Dorsolateral prefrontal cortex (tissue), 120 donors: ENCODE measurements at regions of chr20 and their contacts with region 1.

Region 1: DNA sequence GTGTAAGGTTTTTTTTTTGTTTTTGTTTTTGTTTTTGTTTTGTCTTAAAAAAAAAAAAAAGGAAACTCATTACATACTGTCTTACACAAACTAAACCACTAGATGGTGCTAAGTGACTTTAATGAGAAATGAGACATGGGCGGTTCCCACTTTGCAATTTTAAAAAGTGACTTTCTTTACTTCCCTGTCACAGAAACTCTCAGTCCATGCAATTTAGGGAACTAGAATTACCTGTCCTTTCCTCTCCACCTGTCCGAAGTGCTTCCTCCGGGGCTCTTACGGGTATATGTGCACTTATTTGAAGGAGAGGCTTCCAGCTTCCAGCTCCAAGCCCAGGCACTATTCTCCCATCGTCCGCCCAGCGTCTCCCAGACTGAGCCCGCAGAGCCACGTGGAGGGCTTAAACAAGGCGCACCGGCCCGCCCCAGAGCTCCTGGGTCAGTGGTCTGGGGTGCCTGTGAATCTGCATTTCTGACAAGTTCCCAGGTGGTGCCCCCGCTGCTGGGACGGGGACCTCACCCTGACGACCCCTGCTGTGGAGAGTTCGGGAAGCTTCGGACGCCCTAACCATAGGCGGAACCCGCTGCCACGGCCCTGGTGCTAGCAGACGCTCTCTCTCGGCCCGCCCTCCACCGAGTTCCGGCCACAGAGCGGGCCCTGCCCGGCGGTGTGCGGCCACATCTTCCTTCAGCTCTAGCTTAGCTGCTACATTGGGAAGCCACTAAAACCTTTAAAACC is 26.1 kb downstream of the BFSP1 start:
- DNase-seq: peak in 2 of 10 donors; percentile 11 to 54
- H3K4me3 ChIP-seq: peak overlapping the region; percentile 7 to 68 (median 53)
- H3K27ac ChIP-seq: peak overlapping the region in 6 of 59 donors; percentile 27 to 67 (median 48)
- H3K27me3 ChIP-seq: no peaks in the 10 kb centered on the region
- CTCF ChIP-seq: peak; percentile 62 to 89 (median 76)

Region 2: DNA sequence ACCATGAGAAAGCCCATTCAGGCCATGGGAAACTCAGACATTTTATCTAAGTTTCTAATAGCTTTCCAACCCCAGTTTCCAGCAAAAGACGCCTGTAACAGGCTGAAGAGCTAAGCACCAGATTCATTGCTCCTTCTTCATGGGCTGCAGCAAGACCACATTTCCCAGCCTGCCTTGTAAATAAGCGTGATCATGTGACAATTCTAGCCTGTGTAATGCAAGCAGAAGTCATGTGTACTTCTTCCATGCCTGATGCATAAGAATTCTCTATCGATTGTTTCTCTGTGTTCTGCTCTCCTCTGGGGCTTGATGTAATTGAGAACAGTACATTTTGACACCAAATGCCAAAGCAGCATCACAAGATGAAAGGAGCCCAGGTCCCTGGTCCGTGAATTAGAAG is 271.4 kb before region 1 on chr20:
- intact Hi-C with region 1: no loop called
- DNase-seq: no peak
- H3K4me3 ChIP-seq: no peak overlapping the region
- H3K27ac ChIP-seq: no peak overlapping the region
- H3K27me3 ChIP-seq: peaks cover 0 to 4% (median 0%) of the 10 kb centered on the region in 45 donors
- CTCF ChIP-seq: no peak

Region 3: DNA sequence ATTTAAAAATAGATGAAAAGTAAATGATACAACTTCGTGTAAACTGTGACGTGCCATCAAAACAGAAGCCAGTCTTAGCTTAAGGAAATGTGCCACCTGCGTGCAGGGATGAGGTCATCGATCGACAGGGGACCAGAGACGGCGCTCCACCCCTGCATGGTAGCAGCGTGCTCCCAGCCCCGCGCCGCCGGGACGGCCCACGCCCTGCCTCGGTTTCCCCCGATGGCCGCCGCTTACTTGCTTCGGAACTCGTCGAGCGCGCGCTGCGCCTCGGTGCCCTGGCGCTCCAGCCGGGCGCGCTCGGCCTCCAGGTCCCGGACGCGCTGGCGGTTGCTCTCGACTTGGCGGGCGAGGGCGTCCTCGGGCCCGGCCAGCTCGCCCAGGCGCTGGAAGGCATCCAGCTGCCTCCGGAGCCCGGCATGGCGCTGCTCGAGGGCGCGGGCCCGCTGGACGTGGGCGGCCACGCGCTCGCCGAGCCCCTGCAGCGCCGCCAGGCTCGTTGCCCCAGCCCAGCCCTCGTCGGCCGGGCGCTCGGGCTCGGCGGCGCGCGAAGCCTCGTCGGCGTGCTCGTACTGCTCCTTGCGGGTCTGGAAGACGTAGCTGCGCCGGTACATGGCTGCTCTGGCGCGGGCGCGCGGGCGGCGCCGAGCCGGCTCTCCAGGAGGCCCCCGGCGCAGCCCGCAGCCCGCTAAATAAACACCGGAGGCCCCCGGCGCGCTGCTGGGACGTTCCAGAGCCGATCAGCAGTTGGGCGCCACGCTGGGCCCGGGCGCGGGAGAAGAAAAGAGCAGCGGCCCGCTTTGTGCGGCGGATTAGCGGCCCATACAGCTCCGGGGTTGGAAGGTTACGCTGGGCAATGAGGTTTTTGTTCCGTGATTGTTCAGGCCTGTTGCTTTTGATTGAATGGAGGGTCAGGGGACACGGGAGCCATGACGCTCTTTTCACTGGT is 25.9 kb after region 1 on chr20 and contains the start of gene BFSP1:
- intact Hi-C with region 1: loop called in 1 of 2 experiments (anchors 2 kb)
- DNase-seq: peak in 8 of 10 donors; percentile 26 to 73 (median 52)
- H3K4me3 ChIP-seq: peak within 1 kb of the TSS; percentile 34 to 76 (median 63)
- H3K27ac ChIP-seq: peak within 1 kb of the TSS in 46 of 59 donors; percentile 1 to 86 (median 68)
- H3K27me3 ChIP-seq: no peaks in the 10 kb centered on the region
- CTCF ChIP-seq: peak in 11 of 56 donors; percentile 5 to 38 (median 9)
- total RNA-seq, gene BFSP1: 0.67 to 6.9 (median 3.2) TPM

Region 4: DNA sequence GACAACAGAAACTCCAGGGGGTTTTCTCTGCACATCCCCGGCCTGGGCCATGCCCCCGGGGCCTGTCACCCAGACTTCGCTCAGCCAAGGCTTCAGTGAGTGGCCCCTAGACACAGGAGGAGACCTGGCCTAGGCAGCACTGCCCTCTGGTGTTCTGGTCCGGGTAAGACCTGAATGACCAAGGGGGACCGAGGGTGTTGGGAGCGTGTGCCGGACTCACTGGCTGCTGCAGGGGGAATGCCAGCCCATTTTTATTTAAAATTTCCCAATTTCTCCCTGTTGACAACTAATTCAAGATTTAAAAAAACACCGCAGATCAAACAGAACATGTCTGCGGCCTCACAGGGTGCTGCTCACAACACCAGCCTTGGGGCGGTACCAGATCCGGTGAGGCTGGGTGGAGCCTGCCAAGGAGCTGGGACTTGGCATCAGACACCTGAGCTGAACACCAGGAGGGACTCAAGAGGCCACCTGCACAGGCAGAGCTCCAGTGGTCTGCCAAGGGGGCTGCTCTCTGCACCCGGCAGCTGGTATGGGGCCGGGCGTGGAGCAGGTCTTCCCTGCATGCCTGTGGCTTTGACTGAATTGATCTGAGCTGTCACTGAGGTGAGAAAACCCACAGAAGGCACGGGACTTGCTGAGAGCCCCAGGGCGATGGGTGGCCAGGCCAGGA is 112.6 kb after region 1 on chr20:
- intact Hi-C with region 1: loop called (anchors 10 kb)
- DNase-seq: peak; percentile 54 to 85 (median 65)
- H3K4me3 ChIP-seq: peak overlapping the region in 1 of 59 donors; percentile 13
- H3K27ac ChIP-seq: peak overlapping the region in 2 of 59 donors; percentile 18 to 19
- H3K27me3 ChIP-seq: no peaks in the 10 kb centered on the region
- CTCF ChIP-seq: peak in 55 of 56 donors; percentile 56 to 87 (median 77)

Region 5: GRCh38 chr20:17699931-17700657 is 195.0 kb after region 1 on chr20 and contains the start of gene BANF2:
- intact Hi-C with region 1: no loop called
- DNase-seq: no peak
- H3K4me3 ChIP-seq: no peak within 1 kb of the TSS
- H3K27ac ChIP-seq: no peak within 1 kb of the TSS
- H3K27me3 ChIP-seq: peaks cover 0 to 3% (median 0%) of the 10 kb centered on the region in 45 donors
- CTCF ChIP-seq: no peak
- total RNA-seq, gene BANF2: not detected

Region 6: GRCh38 chr20:17898548-17898994 is 393.5 kb after region 1 on chr20:
- intact Hi-C with region 1: loop called (anchors 2 to 10 kb)
- DNase-seq: peak in 7 of 10 donors; percentile 36 to 86 (median 70)
- H3K4me3 ChIP-seq: no peak overlapping the region
- H3K27ac ChIP-seq: no peak overlapping the region
- H3K27me3 ChIP-seq: no peaks in the 10 kb centered on the region
- CTCF ChIP-seq: peak; percentile 78 to 96 (median 90)

Region 7: DNA sequence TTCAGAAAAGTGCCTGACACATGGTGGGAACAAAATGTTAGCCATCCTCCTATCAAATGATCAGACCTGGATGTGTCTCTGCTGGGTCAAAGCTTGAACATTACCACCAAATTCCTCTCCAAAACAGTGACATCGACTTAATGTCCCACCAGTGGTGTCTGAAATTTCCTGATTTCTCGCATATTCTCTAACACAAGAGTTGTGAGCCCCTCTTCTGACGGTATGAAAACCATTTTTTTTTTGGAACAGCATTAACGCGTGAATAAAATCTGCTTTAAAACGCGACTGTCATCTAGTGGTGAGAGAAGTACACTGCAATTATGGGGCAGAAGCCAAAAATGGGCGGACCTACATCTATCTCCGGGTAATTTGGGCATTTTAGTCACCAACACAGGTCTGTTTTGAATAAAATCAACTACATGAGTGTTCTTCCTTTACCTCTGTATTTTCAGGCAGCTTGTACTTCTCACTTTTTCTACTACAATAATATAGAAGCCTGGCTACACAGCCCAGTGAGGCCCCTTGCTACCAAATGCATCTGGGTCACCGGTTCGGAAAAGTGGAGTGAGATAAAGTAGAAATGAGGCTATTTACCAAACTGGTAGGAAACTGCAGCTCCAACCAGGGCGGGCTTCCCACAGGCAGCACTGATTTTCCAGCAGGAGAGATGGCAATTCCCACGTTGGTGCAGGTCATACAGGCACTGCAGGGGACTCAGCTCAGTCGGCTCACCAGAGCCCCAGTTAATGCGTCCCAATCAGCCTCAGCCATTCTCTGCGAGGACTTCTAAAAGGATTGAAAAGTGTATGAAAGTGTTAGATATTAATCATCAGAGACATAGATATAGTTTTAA is 491.1 kb after region 1 on chr20:
- intact Hi-C with region 1: loop called (anchors 5 to 10 kb)
- DNase-seq: peak in 2 of 10 donors; percentile 53 to 61
- H3K4me3 ChIP-seq: peak overlapping the region in 37 of 59 donors; percentile 0 to 49 (median 25)
- H3K27ac ChIP-seq: peak overlapping the region in 24 of 59 donors; percentile 19 to 79 (median 56)
- H3K27me3 ChIP-seq: no peaks in the 10 kb centered on the region
- CTCF ChIP-seq: peak; percentile 75 to 96 (median 89)

Region 8: GRCh38 chr20:18276821-18277220 is 771.8 kb after region 1 on chr20:
- intact Hi-C with region 1: loop called in 1 of 2 experiments (anchors 2 kb)
- DNase-seq: peak; percentile 35 to 80 (median 71)
- H3K4me3 ChIP-seq: peak overlapping the region in 10 of 59 donors; percentile 2 to 16 (median 8)
- H3K27ac ChIP-seq: no peak overlapping the region
- H3K27me3 ChIP-seq: peaks cover 0 to 21% (median 6%) of the 10 kb centered on the region in 45 donors
- CTCF ChIP-seq: peak in 55 of 56 donors; percentile 54 to 87 (median 78)